MCF 10A (cell line): ENCODE measurements at regions of chr15 and their contacts with region 1.

Region 1: DNA sequence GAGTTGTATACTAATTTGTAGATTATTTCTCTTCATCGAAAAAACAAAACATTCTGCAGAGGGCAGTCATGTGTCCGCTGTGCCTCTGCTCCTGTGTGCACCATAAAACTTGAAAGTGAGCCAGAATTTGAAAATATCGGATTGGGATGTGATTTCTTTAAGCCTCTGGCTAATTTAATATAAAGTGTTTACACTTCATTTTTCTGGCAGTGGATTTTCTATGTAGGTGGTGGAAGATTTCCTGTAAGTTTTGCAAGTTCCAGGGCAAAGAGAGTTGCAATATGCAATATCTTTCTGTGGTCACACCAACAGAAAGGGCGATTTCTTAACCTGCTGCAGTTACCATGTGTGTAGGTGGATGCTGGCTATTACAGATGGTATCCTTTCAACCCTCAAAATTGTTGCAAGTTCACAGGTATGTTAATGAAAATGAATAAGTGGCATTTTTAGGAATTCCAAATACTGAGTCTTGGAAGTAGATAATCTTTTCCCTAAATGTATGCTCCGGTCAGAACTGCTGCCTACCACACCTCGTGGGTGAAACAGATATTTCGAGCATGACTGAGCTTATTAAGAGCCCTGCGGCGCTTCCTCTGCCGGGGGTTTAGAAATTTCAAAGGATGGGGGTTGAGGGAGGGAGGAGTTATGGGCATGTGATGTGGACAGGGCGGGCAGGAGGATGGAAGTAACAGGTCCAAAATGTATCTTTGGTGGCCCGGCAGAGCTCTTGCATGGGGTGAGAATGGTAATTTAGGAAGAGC is 134.0 kb downstream of the PGPEP1L start:
- DNase-seq: peak; percentile 97
- H3K4me3 Mint-ChIP-seq: peak overlapping the region; percentile 69
- H3K27ac Mint-ChIP-seq: peak overlapping the region; percentile 80
- H3K4me1 Mint-ChIP-seq: peaks cover 47% of the 10 kb centered on the region
- H3K27me3 Mint-ChIP-seq: no peaks in the 10 kb centered on the region
- CTCF ChIP-seq: no peak

Region 2: GRCh38 chr15:98350276-98350675 is 523.3 kb before region 1 on chr15:
- CTCF ChIA-PET with region 1: no interaction called
- POLR2A ChIA-PET with region 1: no interaction called
- intact Hi-C with region 1: no loop called
- DNase-seq: no peak
- H3K4me3 Mint-ChIP-seq: no peak overlapping the region
- H3K27ac Mint-ChIP-seq: no peak overlapping the region
- H3K4me1 Mint-ChIP-seq: no peaks in the 10 kb centered on the region
- H3K27me3 Mint-ChIP-seq: peaks cover 29% of the 10 kb centered on the region
- CTCF ChIP-seq: no peak

Region 3: GRCh38 chr15:98658831-98659699 is 214.6 kb before region 1 on chr15:
- CTCF ChIA-PET with region 1: interaction called, 19 read pairs
- POLR2A ChIA-PET with region 1: interaction called, 148 read pairs
- intact Hi-C with region 1: no loop called
- DNase-seq: peak; percentile 76
- H3K4me3 Mint-ChIP-seq: no peak overlapping the region
- H3K27ac Mint-ChIP-seq: peak overlapping the region; percentile 3
- H3K4me1 Mint-ChIP-seq: peaks cover 44% of the 10 kb centered on the region
- H3K27me3 Mint-ChIP-seq: no peaks in the 10 kb centered on the region
- CTCF ChIP-seq: peak; percentile 69

Region 4: GRCh38 chr15:98668566-98669308 is 204.9 kb before region 1 on chr15:
- CTCF ChIA-PET with region 1: no interaction called
- POLR2A ChIA-PET with region 1: interaction called, 36 read pairs
- intact Hi-C with region 1: no loop called
- DNase-seq: peak; percentile 76
- H3K4me3 Mint-ChIP-seq: peak overlapping the region; percentile 17
- H3K27ac Mint-ChIP-seq: peak overlapping the region; percentile 60
- H3K4me1 Mint-ChIP-seq: peaks cover 47% of the 10 kb centered on the region
- H3K27me3 Mint-ChIP-seq: no peaks in the 10 kb centered on the region
- CTCF ChIP-seq: no peak

Region 5: DNA sequence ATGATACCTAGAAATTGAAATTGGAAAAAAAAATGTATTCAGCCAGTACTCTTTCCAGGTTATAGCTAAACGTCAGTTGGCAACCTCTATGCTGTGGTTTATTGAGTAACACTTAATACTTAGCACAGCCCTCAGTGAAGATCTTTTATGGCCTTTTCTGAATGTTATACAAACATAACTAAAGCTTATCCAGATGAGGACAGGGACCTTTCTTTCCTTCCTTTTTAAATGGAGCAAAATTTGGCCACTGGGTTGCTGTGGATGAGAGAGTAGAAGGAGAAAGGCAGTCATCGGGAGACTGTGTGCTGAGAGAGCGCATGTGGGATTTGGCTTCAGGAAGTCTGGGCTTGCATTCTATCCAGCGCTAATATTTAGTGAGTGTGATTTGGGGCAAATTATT is 189.2 kb before region 1 on chr15:
- CTCF ChIA-PET with region 1: interaction called, 4 read pairs
- POLR2A ChIA-PET with region 1: interaction called, 47 read pairs
- intact Hi-C with region 1: no loop called
- DNase-seq: peak; percentile 72
- H3K4me3 Mint-ChIP-seq: peak overlapping the region; percentile 53
- H3K27ac Mint-ChIP-seq: peak overlapping the region; percentile 95
- H3K4me1 Mint-ChIP-seq: peaks cover 59% of the 10 kb centered on the region
- H3K27me3 Mint-ChIP-seq: no peaks in the 10 kb centered on the region
- CTCF ChIP-seq: no peak

Region 6: DNA sequence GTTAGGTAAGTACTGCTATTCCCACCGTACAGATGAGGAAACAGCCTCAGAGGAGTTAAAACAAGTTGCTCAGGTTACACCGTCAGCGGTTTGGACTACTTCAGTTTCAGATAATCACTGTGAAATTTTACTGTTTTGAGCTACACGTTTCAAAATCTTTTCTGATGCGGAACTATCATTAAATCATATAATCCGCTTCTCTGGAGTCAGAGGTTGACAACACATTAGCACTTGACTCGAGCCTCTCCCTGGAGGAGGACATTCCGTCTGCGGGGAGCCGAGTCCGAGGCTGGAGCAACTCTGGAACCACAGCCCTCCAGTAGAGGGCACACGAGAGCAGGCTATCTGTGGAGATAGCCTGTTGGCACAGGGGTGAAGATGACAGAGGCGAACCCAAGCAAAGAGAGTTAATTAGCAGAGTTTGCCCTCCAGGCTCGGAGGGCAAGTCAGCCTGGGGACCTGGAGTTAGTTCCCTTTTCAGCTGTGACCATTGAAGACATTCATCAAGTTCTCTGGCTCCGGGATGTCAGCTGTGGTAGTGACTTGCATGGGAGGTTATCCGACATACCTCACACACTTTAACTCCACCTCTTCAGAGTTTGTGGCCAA is 94.1 kb before region 1 on chr15:
- CTCF ChIA-PET with region 1: no interaction called
- POLR2A ChIA-PET with region 1: interaction called, 12 read pairs
- intact Hi-C with region 1: no loop called
- DNase-seq: peak; percentile 69
- H3K4me3 Mint-ChIP-seq: peak overlapping the region; percentile 45
- H3K27ac Mint-ChIP-seq: no peak overlapping the region
- H3K4me1 Mint-ChIP-seq: no peaks in the 10 kb centered on the region
- H3K27me3 Mint-ChIP-seq: no peaks in the 10 kb centered on the region
- CTCF ChIP-seq: peak; percentile 58

Region 7: DNA sequence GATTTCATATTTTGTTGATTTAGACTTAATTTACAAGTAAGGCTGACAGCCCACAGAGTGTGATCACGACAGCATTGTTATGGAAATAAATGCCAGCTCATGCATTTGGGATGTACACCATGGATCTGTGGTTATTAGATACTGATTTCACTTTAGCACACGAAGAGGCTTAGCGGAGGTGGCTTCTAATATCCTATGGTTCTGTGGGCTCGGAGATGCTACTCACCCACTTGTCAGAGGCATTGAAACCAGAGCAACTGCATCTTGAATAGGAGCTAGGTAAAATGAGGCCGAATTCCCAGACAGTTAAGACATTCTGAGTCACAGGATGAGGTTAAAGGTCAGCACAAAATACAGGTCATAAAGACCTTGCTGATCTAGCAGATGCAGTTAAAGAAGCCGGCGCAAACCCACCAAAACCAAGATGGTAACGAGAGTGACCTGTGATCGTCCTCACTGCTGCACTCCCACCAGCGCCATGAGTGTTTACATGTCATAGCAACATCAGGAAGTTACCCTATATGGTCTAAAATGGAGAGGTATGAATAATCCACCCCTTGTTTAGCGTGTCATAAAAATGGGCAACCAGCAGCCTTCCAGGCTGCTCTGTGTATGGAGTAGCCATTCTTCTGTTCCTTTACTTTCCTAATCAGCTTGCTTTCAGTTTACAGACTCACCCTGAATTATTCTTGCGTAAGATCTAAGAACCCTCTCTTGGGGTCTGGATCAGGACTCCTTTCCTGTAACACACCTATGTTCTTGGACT is 16.5 kb after region 1 on chr15:
- CTCF ChIA-PET with region 1: interaction called, 4 read pairs
- POLR2A ChIA-PET with region 1: interaction called, 102 read pairs
- intact Hi-C with region 1: no loop called
- DNase-seq: peak; percentile 59
- H3K4me3 Mint-ChIP-seq: peak overlapping the region; percentile 35
- H3K27ac Mint-ChIP-seq: peak overlapping the region; percentile 89
- H3K4me1 Mint-ChIP-seq: peaks cover 45% of the 10 kb centered on the region
- H3K27me3 Mint-ChIP-seq: no peaks in the 10 kb centered on the region
- CTCF ChIP-seq: no peak

Region 8: GRCh38 chr15:98896802-98897732 is 23.4 kb after region 1 on chr15:
- CTCF ChIA-PET with region 1: interaction called, 36 read pairs
- POLR2A ChIA-PET with region 1: interaction called, 102 read pairs
- intact Hi-C with region 1: no loop called
- DNase-seq: peak; percentile 98
- H3K4me3 Mint-ChIP-seq: peak overlapping the region; percentile 62
- H3K27ac Mint-ChIP-seq: peak overlapping the region; percentile 95
- H3K4me1 Mint-ChIP-seq: peaks cover 45% of the 10 kb centered on the region
- H3K27me3 Mint-ChIP-seq: no peaks in the 10 kb centered on the region
- CTCF ChIP-seq: no peak